Dorsolateral prefrontal cortex (tissue), 120 donors: ENCODE measurements at regions of chr17 and their contacts with region 1.

Region 1: DNA sequence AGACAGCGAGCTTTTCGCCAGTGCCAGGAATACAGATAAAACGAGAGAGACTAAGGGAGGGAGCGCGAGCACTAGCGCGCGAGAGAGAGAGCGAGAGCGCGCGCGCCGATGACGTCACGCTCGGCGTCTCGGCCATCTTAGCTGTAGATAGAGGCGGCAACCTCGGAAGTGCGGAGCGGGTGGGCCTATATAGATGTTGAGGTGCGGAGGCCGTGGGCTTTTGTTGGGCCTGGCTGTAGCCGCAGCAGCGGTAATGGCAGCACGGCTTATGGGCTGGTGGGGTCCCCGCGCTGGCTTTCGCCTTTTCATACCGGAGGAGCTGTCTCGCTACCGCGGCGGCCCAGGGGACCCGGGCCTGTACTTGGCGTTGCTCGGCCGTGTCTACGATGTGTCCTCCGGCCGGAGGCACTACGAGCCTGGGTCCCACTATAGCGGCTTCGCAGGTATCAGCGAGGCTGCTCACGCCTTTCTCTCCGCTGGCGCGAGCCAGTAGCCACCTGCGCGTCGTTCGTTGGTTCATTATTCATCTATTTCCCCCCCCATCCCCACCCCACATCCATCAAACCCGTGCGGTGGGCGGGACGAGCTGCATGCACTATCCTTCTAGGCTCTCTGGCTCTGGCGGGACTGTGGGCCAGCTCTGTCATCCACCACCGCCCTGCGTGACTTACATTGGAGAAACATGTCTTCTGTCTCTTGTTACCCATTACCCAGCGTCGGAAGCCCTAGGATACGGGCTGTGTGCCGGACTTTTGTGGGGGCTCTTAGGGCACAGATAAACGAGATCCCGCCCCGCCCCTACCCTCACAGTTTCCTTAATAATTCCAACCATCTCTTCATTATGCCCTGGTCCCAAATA is 795 bp downstream of the CYB5D2 start:
- DNase-seq: peak; percentile 86 to 93 (median 91)
- H3K4me3 ChIP-seq: peak overlapping the region; percentile 80 to 100 (median 97)
- H3K27ac ChIP-seq: peak overlapping the region; percentile 91 to 100 (median 99)
- H3K27me3 ChIP-seq: no peaks in the 10 kb centered on the region
- CTCF ChIP-seq: peak in 3 of 56 donors; percentile 5 to 19 (median 9)

Region 2: DNA sequence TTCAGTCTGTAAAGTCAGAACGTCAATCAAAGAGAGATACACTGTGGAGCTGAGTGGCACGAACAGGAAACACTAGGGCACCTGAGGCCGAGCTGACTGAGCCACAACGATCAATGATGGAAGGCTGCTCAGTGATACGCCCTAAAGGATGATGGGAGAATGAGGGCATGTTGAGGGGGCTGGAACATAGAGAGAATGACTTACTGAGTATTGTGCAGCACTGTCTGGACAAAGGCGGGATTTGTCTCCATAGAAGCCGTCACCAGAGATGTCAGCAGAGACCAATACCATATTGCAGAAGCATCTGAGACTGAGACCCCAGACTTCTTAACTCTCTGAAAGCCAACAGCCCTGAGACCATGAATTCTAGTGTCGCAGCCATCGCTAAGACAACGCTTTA is 34.3 kb before region 1 on chr17:
- intact Hi-C with region 1: loop called in 1 of 2 experiments (anchors 5 kb)
- DNase-seq: peak in 2 of 10 donors; percentile 36 to 61
- H3K4me3 ChIP-seq: peak overlapping the region in 1 of 59 donors; percentile 19
- H3K27ac ChIP-seq: peak overlapping the region in 52 of 59 donors; percentile 4 to 89 (median 63)
- H3K27me3 ChIP-seq: no peaks in the 10 kb centered on the region
- CTCF ChIP-seq: no peak